Left cardiac atrium (tissue), 4 donors: ENCODE measurements at regions of chr1 and their contacts with region 1.

Region 1: GRCh38 chr1:113095790-113096455 is 22.9 kb downstream of the LRIG2 start:
- DNase-seq: no peak
- ATAC-seq: no peak

Region 2: DNA sequence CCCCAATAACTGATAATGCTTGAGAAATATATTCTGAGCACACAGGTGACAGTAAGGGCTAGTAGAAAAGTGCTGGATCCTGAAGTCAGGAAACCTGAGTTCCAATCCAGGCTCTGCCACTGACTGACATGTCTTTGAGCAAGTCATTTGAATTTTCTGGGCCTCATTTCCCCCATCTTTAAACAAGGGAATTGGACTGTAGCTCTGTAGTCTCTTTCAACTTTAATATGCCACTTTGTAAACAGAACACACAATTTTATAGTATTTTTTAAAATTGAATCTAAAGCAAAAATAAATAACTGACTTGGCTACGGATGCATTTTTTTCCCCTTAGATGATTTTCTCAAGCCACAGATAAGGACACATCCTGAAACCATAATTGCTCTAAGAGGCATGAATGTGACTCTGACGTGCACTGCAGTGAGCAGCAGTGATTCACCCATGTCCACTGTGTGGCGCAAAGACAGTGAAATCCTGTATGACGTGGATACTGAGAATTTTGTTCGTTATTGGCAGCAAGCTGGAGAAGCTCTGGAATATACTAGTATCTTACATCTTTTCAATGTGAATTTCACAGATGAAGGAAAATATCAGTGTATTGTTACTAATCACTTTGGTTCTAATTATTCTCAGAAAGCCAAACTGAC is 14.1 kb after region 1 on chr1:
- intact Hi-C with region 1: loop called in 1 of 2 experiments (anchors 2 kb)
- DNase-seq: peak; percentile 54
- ATAC-seq: peak; percentile 89 to 94

Region 3: GRCh38 chr1:113140588-113141446 is 44.9 kb after region 1 on chr1:
- intact Hi-C with region 1: no loop called
- DNase-seq: peak; percentile 61
- ATAC-seq: peak; percentile 88 to 91

Region 4: GRCh38 chr1:113207019-113207418 is 111.1 kb after region 1 on chr1:
- intact Hi-C with region 1: no loop called
- DNase-seq: no peak
- ATAC-seq: no peak

Region 5: DNA sequence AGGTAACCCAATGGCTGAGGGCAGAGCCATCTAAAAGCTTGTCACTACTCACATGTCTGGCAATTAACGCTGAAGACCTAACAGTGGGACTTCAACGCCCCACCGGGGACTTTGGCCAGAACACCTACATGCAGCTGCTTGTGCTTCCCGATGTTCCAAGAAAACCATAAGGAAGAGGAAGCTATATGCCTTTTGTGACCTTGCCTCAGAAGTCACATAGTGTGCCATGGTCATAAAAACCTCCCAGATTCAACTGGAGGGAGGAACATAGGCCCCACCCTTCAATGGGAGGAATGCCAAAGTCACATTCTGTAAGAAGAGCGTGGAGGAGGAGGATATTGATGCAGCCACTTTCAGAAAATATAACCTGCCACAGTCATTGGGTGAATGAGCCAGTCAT is 146.6 kb after region 1 on chr1:
- intact Hi-C with region 1: no loop called
- DNase-seq: no peak
- ATAC-seq: no peak